T-cell (primary cell): ENCODE measurements at regions of chr13 and their contacts with region 1.

Region 1: GRCh38 chr13:38520041-38520615 is 166.7 kb upstream of the FREM2 start:
- DNase-seq: no peak
- ATAC-seq: no peak
- H3K4me3 ChIP-seq: no peak overlapping the region
- H3K4me3 Mint-ChIP-seq: no peak overlapping the region
- H3K27ac ChIP-seq: no peak overlapping the region
- H3K27ac Mint-ChIP-seq: no peak overlapping the region
- H3K4me1 ChIP-seq: no peaks in the 10 kb centered on the region
- H3K4me1 Mint-ChIP-seq: no peaks in the 10 kb centered on the region
- H3K27me3 ChIP-seq: peaks cover 0 to 4% of the 10 kb centered on the region in 2 experiments
- H3K27me3 Mint-ChIP-seq: peaks cover 0 to 4% of the 10 kb centered on the region in 2 donors

Region 2: GRCh38 chr13:37288057-37288720 is 1231.9 kb before region 1 on chr13:
- CTCF ChIA-PET with region 1: no interaction called
- POLR2A ChIA-PET with region 1: no interaction called
- DNase-seq: no peak
- ATAC-seq: no peak
- H3K4me3 ChIP-seq: no peak overlapping the region
- H3K4me3 Mint-ChIP-seq: no peak overlapping the region
- H3K27ac ChIP-seq: no peak overlapping the region
- H3K27ac Mint-ChIP-seq: no peak overlapping the region
- H3K4me1 ChIP-seq: no peaks in the 10 kb centered on the region
- H3K4me1 Mint-ChIP-seq: no peaks in the 10 kb centered on the region
- H3K27me3 ChIP-seq: no peaks in the 10 kb centered on the region
- H3K27me3 Mint-ChIP-seq: no peaks in the 10 kb centered on the region

Region 3: DNA sequence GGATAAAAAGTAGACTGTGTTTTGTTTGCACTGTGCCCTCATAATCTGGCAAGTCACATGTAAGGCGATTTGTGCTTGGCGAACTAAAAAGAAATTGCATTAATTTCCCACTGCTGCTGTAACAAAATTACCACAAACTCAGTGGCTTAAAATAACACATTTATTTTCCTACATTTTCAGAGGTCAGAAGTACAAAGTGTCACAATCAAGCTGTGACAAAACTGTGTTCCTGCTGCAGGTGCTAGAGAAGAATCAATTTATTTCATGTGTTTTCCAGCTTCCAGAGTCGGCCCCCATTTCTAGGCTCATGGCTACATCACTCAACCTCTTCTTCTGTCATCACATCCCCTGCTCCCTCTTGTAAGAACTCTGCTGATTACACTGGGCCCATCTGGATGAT is 329.1 kb before region 1 on chr13:
- CTCF ChIA-PET with region 1: no interaction called
- POLR2A ChIA-PET with region 1: no interaction called
- DNase-seq: no peak
- ATAC-seq: no peak
- H3K4me3 ChIP-seq: no peak overlapping the region
- H3K4me3 Mint-ChIP-seq: no peak overlapping the region
- H3K27ac ChIP-seq: no peak overlapping the region
- H3K27ac Mint-ChIP-seq: no peak overlapping the region
- H3K4me1 ChIP-seq: no peaks in the 10 kb centered on the region
- H3K4me1 Mint-ChIP-seq: no peaks in the 10 kb centered on the region
- H3K27me3 ChIP-seq: no peaks in the 10 kb centered on the region
- H3K27me3 Mint-ChIP-seq: no peaks in the 10 kb centered on the region

Region 4: GRCh38 chr13:38417727-38418126 is 102.4 kb before region 1 on chr13:
- CTCF ChIA-PET with region 1: no interaction called
- POLR2A ChIA-PET with region 1: no interaction called
- DNase-seq: peak in 1 of 35 experiments; percentile 2
- ATAC-seq: no peak
- H3K4me3 ChIP-seq: no peak overlapping the region
- H3K4me3 Mint-ChIP-seq: no peak overlapping the region
- H3K27ac ChIP-seq: no peak overlapping the region
- H3K27ac Mint-ChIP-seq: no peak overlapping the region
- H3K4me1 ChIP-seq: no peaks in the 10 kb centered on the region
- H3K4me1 Mint-ChIP-seq: peaks cover 6 to 9% (median 7%) of the 10 kb centered on the region in 3 donors
- H3K27me3 ChIP-seq: no peaks in the 10 kb centered on the region
- H3K27me3 Mint-ChIP-seq: no peaks in the 10 kb centered on the region

Region 5: GRCh38 chr13:38566519-38566918 is 46.4 kb after region 1 on chr13:
- CTCF ChIA-PET with region 1: interaction called in 1 of 2 experiments, 10 read pairs
- POLR2A ChIA-PET with region 1: no interaction called
- DNase-seq: no peak
- ATAC-seq: no peak
- H3K4me3 ChIP-seq: no peak overlapping the region
- H3K4me3 Mint-ChIP-seq: no peak overlapping the region
- H3K27ac ChIP-seq: no peak overlapping the region
- H3K27ac Mint-ChIP-seq: no peak overlapping the region
- H3K4me1 ChIP-seq: no peaks in the 10 kb centered on the region
- H3K4me1 Mint-ChIP-seq: no peaks in the 10 kb centered on the region
- H3K27me3 ChIP-seq: no peaks in the 10 kb centered on the region
- H3K27me3 Mint-ChIP-seq: peaks cover 0 to 14% of the 10 kb centered on the region in 2 donors

Region 6: GRCh38 chr13:38784037-38784880 is 264.1 kb after region 1 on chr13:
- CTCF ChIA-PET with region 1: no interaction called
- POLR2A ChIA-PET with region 1: no interaction called
- DNase-seq: no peak
- ATAC-seq: no peak
- H3K4me3 ChIP-seq: no peak overlapping the region
- H3K4me3 Mint-ChIP-seq: no peak overlapping the region
- H3K27ac ChIP-seq: no peak overlapping the region
- H3K27ac Mint-ChIP-seq: no peak overlapping the region
- H3K4me1 ChIP-seq: no peaks in the 10 kb centered on the region
- H3K4me1 Mint-ChIP-seq: no peaks in the 10 kb centered on the region
- H3K27me3 ChIP-seq: no peaks in the 10 kb centered on the region
- H3K27me3 Mint-ChIP-seq: no peaks in the 10 kb centered on the region